Activated CD4-positive, alpha-beta T cell treated with anti-CD3 and anti-CD28 coated beads, Interleukin-2, amount 10 ng/mL, durations not matched to agents 24 days and 14 days (primary cell): ENCODE measurements at regions of chr2 and their contacts with region 1.

Region 1: GRCh38 chr2:71130113-71130904 is at the starts of genes MCEE and MPHOSPH10:
- DNase-seq: peak; percentile 97
- H3K4me3 Mint-ChIP-seq: no peak within 1 kb of the TSS
- H3K27ac Mint-ChIP-seq: no peak within 1 kb of the TSS
- H3K4me1 Mint-ChIP-seq: peaks cover 8% of the 10 kb centered on the region
- H3K27me3 Mint-ChIP-seq: no peaks in the 10 kb centered on the region
- total RNA-seq, gene MCEE: 14.4 and 17.2 TPM in 2 replicates
- total RNA-seq, gene MPHOSPH10: 69.4 and 74.5 TPM in 2 replicates

Region 2: GRCh38 chr2:71018625-71019024 is 111.7 kb before region 1 on chr2:
- intact Hi-C with region 1: loop called (anchors 1 kb)
- DNase-seq: no peak
- H3K4me3 Mint-ChIP-seq: no peak overlapping the region
- H3K27ac Mint-ChIP-seq: no peak overlapping the region
- H3K4me1 Mint-ChIP-seq: peaks cover 7% of the 10 kb centered on the region
- H3K27me3 Mint-ChIP-seq: no peaks in the 10 kb centered on the region

Region 3: GRCh38 chr2:71068218-71069035 is 61.9 kb before region 1 on chr2 and contains the start of gene NAGK:
- intact Hi-C with region 1: loop called (anchors 1 kb)
- DNase-seq: peak; percentile 99
- H3K4me3 Mint-ChIP-seq: peak within 1 kb of the TSS; percentile 92
- H3K27ac Mint-ChIP-seq: peak within 1 kb of the TSS; percentile 96
- H3K4me1 Mint-ChIP-seq: peaks cover 51% of the 10 kb centered on the region
- H3K27me3 Mint-ChIP-seq: no peaks in the 10 kb centered on the region
- total RNA-seq, gene NAGK: 55.9 and 67.1 TPM in 2 replicates

Region 4: GRCh38 chr2:71331581-71332434 is 201.5 kb after region 1 on chr2 and contains the start of gene ZNF638:
- intact Hi-C with region 1: loop called (anchors 1 kb)
- DNase-seq: peak; percentile 98
- H3K4me3 Mint-ChIP-seq: peak within 1 kb of the TSS; percentile 94
- H3K27ac Mint-ChIP-seq: peak within 1 kb of the TSS; percentile 100
- H3K4me1 Mint-ChIP-seq: peaks cover 20% of the 10 kb centered on the region
- H3K27me3 Mint-ChIP-seq: peaks cover 12% of the 10 kb centered on the region
- total RNA-seq, gene ZNF638: 90.2 and 91.5 TPM in 2 replicates

Region 5: DNA sequence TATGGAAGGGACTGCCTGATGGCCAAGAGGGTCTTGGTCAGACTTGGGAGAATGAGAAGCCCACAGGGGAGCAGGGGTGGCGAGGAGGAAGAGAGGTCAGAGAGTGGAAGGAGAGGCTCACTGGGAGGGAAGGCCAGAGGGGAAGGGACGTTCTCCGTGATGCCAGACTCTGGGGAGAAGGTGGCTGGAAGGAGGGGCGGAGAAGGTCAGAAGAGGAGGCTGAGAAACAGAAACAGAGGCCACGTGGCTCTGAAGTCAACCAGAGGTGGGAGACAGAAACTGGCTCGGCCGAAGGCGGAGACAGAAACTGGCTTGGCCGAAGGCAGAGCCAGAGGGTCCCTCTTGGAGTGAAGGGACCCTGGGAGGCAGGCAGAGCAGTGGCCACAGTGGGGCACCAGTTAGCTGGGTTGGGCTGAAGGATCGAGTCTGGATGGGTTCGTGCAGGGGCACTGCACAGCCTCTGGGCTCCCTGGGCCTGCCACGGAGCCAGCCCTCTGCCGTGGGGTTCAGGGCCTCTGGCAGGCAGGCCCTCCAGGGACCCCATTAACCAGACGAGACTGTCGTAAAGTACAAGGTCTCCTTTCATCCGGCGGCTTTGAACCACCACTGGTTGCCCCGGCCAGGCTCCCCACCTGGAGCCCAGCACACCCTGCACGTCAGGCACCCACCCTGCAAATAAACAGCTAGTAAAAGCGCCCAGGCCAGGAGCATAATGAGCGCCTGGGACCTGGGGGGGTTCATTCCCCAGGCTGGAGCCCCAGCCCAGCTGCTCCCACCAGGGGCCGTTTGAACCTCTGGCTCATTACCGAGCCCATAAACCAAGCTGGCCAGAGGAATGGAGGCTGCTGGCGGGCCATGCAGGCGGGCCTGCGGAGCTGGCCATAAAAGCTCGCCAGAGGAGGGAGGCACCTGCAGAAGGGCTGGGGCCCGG is 541.9 kb after region 1 on chr2:
- intact Hi-C with region 1: no loop called
- DNase-seq: no peak
- H3K4me3 Mint-ChIP-seq: no peak overlapping the region
- H3K27ac Mint-ChIP-seq: no peak overlapping the region
- H3K4me1 Mint-ChIP-seq: peaks cover 2% of the 10 kb centered on the region
- H3K27me3 Mint-ChIP-seq: no peaks in the 10 kb centered on the region